Activated CD8-positive, alpha-beta T cell treated with anti-CD3 and anti-CD28 coated beads, Interleukin-2, amount 10 ng/mL, durations not matched to agents 7 days and 5 days (primary cell): ENCODE measurements at regions of chr1 and their contacts with region 1.

Region 1: GRCh38 chr1:29181413-29182225 is at the start of gene SRSF4:
- DNase-seq: peak; percentile 99
- ATAC-seq: peak; percentile 91
- H3K4me3 Mint-ChIP-seq: peak within 1 kb of the TSS; percentile 96
- H3K27ac Mint-ChIP-seq: peak within 1 kb of the TSS; percentile 97
- H3K4me1 Mint-ChIP-seq: peaks cover 48% of the 10 kb centered on the region
- H3K27me3 Mint-ChIP-seq: no peaks in the 10 kb centered on the region
- total RNA-seq, gene SRSF4: 122 to 124 TPM

Region 2: GRCh38 chr1:28642847-28643635 is 538.6 kb before region 1 on chr1 and contains the start of gene TAF12:
- CTCF ChIA-PET with region 1: interaction called, 13 read pairs
- POLR2A ChIA-PET with region 1: interaction called, 11 read pairs
- DNase-seq: peak; percentile 94
- ATAC-seq: peak; percentile 90
- H3K4me3 Mint-ChIP-seq: peak within 1 kb of the TSS; percentile 99
- H3K27ac Mint-ChIP-seq: peak within 1 kb of the TSS; percentile 99
- H3K4me1 Mint-ChIP-seq: peaks cover 51% of the 10 kb centered on the region
- H3K27me3 Mint-ChIP-seq: no peaks in the 10 kb centered on the region
- total RNA-seq, gene TAF12: 35.7 to 39.3 TPM

Region 3: DNA sequence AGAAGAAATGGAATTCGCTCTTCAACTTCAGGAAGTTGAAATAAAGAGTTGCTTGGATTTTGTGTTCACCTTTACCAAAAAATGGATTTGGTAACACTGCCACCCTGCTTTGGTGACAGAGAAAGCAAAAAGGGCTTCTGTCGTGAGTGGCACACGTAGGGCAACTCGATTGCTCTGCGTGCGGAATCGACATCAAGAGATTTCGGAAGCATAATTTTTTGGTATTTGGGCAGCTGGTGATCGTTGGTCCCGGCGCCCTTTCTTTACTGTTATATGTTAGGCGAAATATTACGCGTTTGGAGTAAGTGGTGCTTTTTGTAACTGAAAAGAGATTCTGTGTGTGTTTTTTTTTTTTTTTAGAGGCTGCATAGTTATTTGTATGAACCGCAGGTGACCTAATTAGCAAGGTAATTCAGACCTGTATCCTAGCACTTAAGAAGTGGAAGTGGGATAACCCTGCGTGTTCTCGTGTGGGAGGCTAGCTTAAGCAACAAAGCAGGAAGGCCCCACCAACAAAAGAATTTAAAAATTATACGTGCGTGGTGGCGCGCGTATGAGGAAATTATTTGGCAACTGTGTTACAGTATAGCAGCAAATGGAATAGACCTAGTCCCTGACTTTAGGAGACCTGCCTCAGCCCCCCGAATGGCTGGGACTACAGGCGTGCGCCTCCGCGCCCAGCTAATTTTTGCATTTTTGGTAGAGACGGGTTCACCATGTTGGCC is 533.0 kb before region 1 on chr1 and contains the start of gene RNU11:
- CTCF ChIA-PET with region 1: interaction called, 13 read pairs
- POLR2A ChIA-PET with region 1: interaction called, 11 read pairs
- DNase-seq: peak; percentile 93
- ATAC-seq: peak; percentile 80
- H3K4me3 Mint-ChIP-seq: peak within 1 kb of the TSS; percentile 84
- H3K27ac Mint-ChIP-seq: peak within 1 kb of the TSS; percentile 99
- H3K4me1 Mint-ChIP-seq: peaks cover 32% of the 10 kb centered on the region
- H3K27me3 Mint-ChIP-seq: no peaks in the 10 kb centered on the region
- total RNA-seq, gene RNU11: not detected

Region 4: DNA sequence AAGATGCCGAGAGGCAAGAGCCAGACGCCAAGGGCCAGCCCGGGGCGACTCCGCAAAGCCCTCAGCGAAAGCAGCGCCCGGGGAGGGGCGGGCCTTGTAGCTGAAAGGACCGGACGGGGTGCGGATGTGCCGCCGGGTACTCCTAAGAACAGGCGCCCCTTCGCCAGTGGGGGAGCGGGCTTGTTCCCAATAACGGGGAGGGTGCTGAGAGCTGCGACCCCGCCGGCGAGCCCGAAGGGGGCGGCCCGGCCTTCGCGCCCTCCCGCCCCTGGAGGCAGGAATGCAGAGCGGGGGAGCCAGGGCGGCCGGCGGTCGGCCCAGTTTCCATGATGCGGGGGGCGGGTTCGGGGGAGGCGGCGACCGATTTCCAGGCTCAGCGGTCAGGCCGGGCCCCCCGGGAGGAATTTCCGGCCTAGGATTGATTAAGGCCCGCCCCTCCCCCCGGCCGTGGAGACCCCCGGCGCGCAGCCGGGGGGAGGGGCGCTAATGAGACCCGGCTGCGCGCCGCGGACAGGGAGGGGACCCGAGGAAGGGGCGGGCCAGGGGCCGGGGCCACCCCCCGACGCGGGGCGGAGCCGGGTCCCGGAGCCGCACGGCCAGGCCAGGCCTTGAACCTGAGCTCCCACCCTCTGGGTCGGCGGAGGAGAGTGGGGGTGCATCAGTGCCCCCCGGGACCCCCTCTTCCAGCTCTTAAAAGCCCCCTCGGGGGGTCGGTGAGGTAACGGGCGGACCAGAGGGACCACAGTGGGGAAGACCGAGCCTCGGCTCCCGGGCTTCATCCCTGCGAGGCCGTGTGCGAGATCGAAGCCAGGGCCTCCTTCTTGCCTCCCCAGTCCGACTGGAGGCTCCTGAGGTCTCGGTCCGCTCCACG is 57.0 kb before region 1 on chr1:
- CTCF ChIA-PET with region 1: interaction called, 8 read pairs
- POLR2A ChIA-PET with region 1: interaction called, 16 read pairs
- DNase-seq: peak; percentile 74
- ATAC-seq: peak; percentile 66
- H3K4me3 Mint-ChIP-seq: peak overlapping the region; percentile 69
- H3K27ac Mint-ChIP-seq: no peak overlapping the region
- H3K4me1 Mint-ChIP-seq: peaks cover 10% of the 10 kb centered on the region
- H3K27me3 Mint-ChIP-seq: peaks cover 24% of the 10 kb centered on the region

Region 5: GRCh38 chr1:29171089-29171488 is 10.5 kb before region 1 on chr1:
- CTCF ChIA-PET with region 1: interaction called, 41 read pairs
- POLR2A ChIA-PET with region 1: interaction called, 46 read pairs
- DNase-seq: no peak
- ATAC-seq: no peak
- H3K4me3 Mint-ChIP-seq: peak overlapping the region; percentile 52
- H3K27ac Mint-ChIP-seq: peak overlapping the region; percentile 71
- H3K4me1 Mint-ChIP-seq: peaks cover 64% of the 10 kb centered on the region
- H3K27me3 Mint-ChIP-seq: no peaks in the 10 kb centered on the region

Region 6: GRCh38 chr1:29197585-29197924 is 15.9 kb after region 1 on chr1:
- CTCF ChIA-PET with region 1: interaction called, 110 read pairs
- POLR2A ChIA-PET with region 1: interaction called, 27 read pairs
- DNase-seq: peak; percentile 64
- ATAC-seq: peak; percentile 90
- H3K4me3 Mint-ChIP-seq: no peak overlapping the region
- H3K27ac Mint-ChIP-seq: no peak overlapping the region
- H3K4me1 Mint-ChIP-seq: peaks cover 25% of the 10 kb centered on the region
- H3K27me3 Mint-ChIP-seq: no peaks in the 10 kb centered on the region

Region 7: DNA sequence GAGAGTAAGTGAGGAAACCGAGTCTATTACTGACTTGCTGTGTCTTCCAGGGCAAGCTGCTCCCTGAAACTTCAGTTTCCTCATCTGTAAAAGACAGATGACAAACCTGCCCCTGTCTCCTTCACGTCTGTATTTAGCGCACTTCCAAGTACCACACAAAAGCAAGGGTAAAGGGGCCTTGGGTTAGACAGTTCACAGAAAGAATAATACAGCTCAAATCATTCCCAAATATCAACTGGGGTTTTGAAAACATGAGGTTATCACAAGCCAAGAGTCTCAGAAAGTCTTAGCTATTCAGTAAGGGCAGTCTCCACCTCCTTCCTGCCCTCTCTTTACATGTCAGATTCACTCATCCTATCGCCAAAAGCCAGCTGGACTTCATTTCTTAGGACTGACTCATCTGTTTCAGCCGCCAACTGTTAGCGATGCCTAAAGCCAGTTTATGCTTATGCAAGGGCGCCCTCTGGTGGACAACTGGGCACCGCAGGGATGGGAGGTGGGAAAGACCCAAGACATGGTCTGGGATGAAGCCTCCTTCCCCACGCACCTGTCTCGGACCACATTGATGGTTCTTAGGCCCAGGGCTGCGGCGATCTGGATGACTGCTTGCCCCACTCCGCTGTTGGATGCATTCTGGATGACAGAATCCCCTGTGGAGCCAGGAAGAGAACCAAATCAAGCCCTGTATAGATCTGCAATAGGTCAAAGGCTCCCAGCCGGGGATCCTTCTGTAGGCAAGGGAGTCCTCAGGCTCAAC is 21.1 kb after region 1 on chr1:
- CTCF ChIA-PET with region 1: interaction called, 110 read pairs
- POLR2A ChIA-PET with region 1: interaction called, 27 read pairs
- DNase-seq: peak; percentile 92
- ATAC-seq: peak; percentile 95
- H3K4me3 Mint-ChIP-seq: no peak overlapping the region
- H3K27ac Mint-ChIP-seq: peak overlapping the region; percentile 36
- H3K4me1 Mint-ChIP-seq: peaks cover 19% of the 10 kb centered on the region
- H3K27me3 Mint-ChIP-seq: no peaks in the 10 kb centered on the region